Thyroid gland (tissue), 4 donors: ENCODE measurements at regions of chr1 and their contacts with region 1.

Region 1: GRCh38 chr1:212455803-212456528 is 23.2 kb downstream of the NENF start:
- DNase-seq: peak; percentile 86 to 90
- H3K4me3 ChIP-seq: no peak overlapping the region
- H3K27ac ChIP-seq: no peak overlapping the region
- H3K4me1 ChIP-seq: peaks cover 0 to 6% of the 10 kb centered on the region in 2 donors
- H3K27me3 ChIP-seq: no peaks in the 10 kb centered on the region
- CTCF ChIP-seq: peak; percentile 89 to 99 (median 94)
- POLR2A ChIP-seq: no peak

Region 2: GRCh38 chr1:211675230-211676105 is 780.5 kb before region 1 on chr1 and contains the start of gene NEK2:
- intact Hi-C with region 1: loop called (anchors 10 kb)
- DNase-seq: peak; percentile 92 to 93
- H3K4me3 ChIP-seq: peak within 1 kb of the TSS; percentile 22 to 47 (median 42)
- H3K27ac ChIP-seq: no peak within 1 kb of the TSS
- H3K4me1 ChIP-seq: peaks cover 4 to 9% of the 10 kb centered on the region in 2 donors
- H3K27me3 ChIP-seq: no peaks in the 10 kb centered on the region
- CTCF ChIP-seq: peak in 1 of 6 experiments; percentile 13
- POLR2A ChIP-seq: no peak
- total RNA-seq, gene NEK2: 0.11 to 2.4 (median 0.40) TPM in 3 of 4 donors, not detected in the other

Region 3: DNA sequence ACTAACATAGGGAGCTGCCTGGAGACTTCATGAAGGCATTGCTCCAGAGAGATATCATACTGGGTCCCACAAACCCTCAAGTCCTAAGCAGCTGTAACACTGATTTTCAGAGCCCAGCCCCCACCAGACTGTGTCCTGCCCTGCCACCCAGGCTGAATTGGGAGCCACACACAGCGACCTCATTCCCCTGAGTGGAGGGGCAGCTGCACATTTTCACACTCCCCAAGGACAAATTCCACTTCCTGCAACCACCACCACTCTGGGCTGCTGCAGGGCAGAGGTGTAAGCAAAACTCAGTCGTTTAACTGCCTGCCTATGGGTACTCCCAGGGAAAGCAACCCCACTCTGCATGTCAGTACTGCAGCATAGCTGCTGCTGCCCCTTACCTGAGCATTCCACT is 400.6 kb before region 1 on chr1:
- intact Hi-C with region 1: loop called (anchors 5 kb)
- DNase-seq: no peak
- H3K4me3 ChIP-seq: no peak overlapping the region
- H3K27ac ChIP-seq: no peak overlapping the region
- H3K4me1 ChIP-seq: no peaks in the 10 kb centered on the region
- H3K27me3 ChIP-seq: no peaks in the 10 kb centered on the region
- CTCF ChIP-seq: no peak
- POLR2A ChIP-seq: no peak

Region 4: GRCh38 chr1:212375986-212376385 is 80.0 kb before region 1 on chr1:
- intact Hi-C with region 1: loop called (anchors 10 kb)
- DNase-seq: no peak
- H3K4me3 ChIP-seq: no peak overlapping the region
- H3K27ac ChIP-seq: no peak overlapping the region
- H3K4me1 ChIP-seq: no peaks in the 10 kb centered on the region
- H3K27me3 ChIP-seq: no peaks in the 10 kb centered on the region
- CTCF ChIP-seq: no peak
- POLR2A ChIP-seq: no peak

Region 5: DNA sequence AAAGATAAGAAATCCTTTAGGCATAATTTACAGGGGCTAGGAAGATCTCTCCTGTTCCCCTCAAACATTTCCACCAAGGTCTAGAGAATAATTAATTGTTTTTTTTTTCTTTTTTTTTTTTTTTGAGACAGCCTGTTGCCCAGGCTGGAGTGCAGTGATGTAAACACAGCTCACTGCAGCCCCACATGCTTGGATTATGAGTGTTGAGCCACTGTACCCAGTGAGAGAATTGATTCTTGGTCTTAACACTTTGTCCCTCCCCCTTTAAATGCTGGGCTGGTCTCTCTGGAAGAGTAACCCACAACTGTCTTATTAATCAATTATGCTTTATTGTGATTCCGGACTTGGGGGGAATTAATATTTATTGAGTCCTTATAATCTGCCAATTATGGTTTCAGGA is 186.0 kb after region 1 on chr1:
- intact Hi-C with region 1: no loop called
- DNase-seq: no peak
- H3K4me3 ChIP-seq: no peak overlapping the region
- H3K27ac ChIP-seq: no peak overlapping the region
- H3K4me1 ChIP-seq: peaks cover 0 to 3% of the 10 kb centered on the region in 2 donors
- H3K27me3 ChIP-seq: no peaks in the 10 kb centered on the region
- CTCF ChIP-seq: no peak
- POLR2A ChIP-seq: no peak

Region 6: GRCh38 chr1:212712451-212713303 is 256.7 kb after region 1 on chr1:
- intact Hi-C with region 1: no loop called
- DNase-seq: no peak
- H3K4me3 ChIP-seq: no peak overlapping the region
- H3K27ac ChIP-seq: no peak overlapping the region
- H3K4me1 ChIP-seq: no peaks in the 10 kb centered on the region
- H3K27me3 ChIP-seq: no peaks in the 10 kb centered on the region
- CTCF ChIP-seq: no peak
- POLR2A ChIP-seq: no peak

Region 7: GRCh38 chr1:212967801-212968200 is 511.8 kb after region 1 on chr1:
- intact Hi-C with region 1: no loop called
- DNase-seq: no peak
- H3K4me3 ChIP-seq: no peak overlapping the region
- H3K27ac ChIP-seq: no peak overlapping the region
- H3K4me1 ChIP-seq: peaks cover 7 to 23% of the 10 kb centered on the region in 2 donors
- H3K27me3 ChIP-seq: no peaks in the 10 kb centered on the region
- CTCF ChIP-seq: peak in 3 of 6 experiments; percentile 22 to 43 (median 34)
- POLR2A ChIP-seq: no peak